ENCODE measurements at regions of chr16 and their contacts with region 1.

Region 1: DNA sequence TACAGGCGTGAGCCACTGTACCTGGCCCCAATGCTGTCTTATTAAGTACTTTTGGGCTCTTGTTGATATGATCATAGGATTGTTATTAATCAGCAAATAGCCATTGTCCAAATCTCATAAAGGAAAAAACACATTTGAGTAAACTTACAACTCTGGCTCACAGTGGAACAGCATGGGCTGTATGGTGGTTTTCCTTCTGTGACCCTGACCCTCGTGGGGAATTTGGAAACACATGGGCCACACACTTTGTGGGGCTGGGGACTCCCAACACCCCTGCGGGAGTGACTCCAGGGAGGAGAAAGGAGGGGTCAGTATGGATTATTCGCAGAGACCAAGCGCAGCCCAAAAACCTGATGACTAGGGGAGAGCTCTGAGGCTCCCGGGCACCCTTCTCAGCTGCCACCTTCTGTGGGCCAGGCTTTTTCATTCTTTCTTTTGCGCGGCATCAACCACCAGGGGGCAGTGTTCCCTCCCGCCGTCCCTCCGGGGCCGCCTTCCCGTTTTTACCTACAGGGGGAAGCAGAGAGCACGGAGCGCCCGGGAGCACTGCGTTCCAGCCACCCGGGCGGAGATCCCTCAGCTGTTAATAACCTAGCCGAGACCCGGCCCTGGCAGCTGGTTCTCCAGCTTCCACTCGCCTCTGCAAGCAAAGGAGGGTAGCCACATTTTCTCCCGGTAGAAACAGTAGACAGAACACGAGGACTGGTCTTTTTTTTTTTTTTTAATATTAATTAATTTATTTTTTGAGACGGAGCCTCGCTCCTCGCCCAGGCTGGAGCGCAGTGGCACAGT is 9.7 kb downstream of the TSNAXIP1 start:
- DNase-seq: peak; percentile 29 to 91
- H3K4me3 ChIP-seq: no peak overlapping the region
- H3K27ac ChIP-seq: no peak overlapping the region
- H3K4me1 ChIP-seq: no peaks in the 10 kb centered on the region
- H3K27me3 ChIP-seq: no peaks in the 10 kb centered on the region
- CTCF ChIP-seq: peak; percentile 99 to 100 (median 99)

Region 2: DNA sequence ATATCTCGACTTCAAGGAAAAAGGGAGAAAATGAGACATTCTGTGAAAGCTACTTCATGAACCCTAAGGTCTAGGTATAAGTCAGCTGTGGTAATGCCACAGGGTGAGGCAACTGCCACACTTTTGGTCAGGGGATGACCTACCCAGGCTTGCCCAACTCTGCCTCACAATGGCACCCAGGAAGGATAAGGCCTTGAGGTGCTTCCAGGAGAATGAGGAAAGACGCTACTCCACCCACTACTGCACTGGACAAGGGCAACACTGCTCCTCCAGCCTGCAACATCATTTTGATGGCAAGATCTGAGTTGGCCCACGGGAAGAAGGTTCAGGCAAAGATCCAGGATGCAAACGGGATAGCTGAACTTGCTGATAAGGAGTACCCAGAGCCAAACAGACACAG is 75.3 kb before region 1 on chr16:
- intact Hi-C with region 1: no loop called
- DNase-seq: no peak
- H3K4me3 ChIP-seq: no peak overlapping the region
- H3K27ac ChIP-seq: no peak overlapping the region
- H3K4me1 ChIP-seq: no peaks in the 10 kb centered on the region
- H3K27me3 ChIP-seq: no peaks in the 10 kb centered on the region
- CTCF ChIP-seq: no peak

Region 3: GRCh38 chr16:67928561-67929364 is 112.3 kb after region 1 on chr16:
- intact Hi-C with region 1: loop called (anchors 1 kb)
- DNase-seq: peak in 1 of 2 donors; percentile 82
- H3K4me3 ChIP-seq: no peak overlapping the region
- H3K27ac ChIP-seq: no peak overlapping the region
- H3K4me1 ChIP-seq: peaks cover 10% of the 10 kb centered on the region in 2 donors
- H3K27me3 ChIP-seq: no peaks in the 10 kb centered on the region
- CTCF ChIP-seq: peak; percentile 68 to 90 (median 88)

Region 4: DNA sequence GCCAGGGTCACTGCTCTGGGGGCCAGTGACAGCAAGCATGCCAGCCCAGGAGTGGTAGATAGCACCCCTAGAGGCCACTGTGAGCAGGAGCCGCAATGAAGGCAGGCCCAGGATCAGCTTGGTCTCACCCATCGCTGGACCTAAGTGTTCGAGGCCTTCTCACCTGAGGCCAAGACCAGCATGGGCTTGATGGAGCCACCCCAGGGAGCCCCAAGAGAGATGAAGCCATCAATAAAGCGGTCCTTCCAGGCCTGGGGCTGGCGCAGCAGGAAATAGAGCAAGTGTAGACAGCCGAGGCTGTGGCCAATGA is 125.7 kb after region 1 on chr16:
- intact Hi-C with region 1: loop called (anchors 5 kb)
- DNase-seq: no peak
- H3K4me3 ChIP-seq: no peak overlapping the region
- H3K27ac ChIP-seq: peak overlapping the region; percentile 81 to 86
- H3K4me1 ChIP-seq: peaks cover 6 to 16% of the 10 kb centered on the region in 2 donors
- H3K27me3 ChIP-seq: no peaks in the 10 kb centered on the region
- CTCF ChIP-seq: peak; percentile 26 to 60 (median 34)

Region 5: GRCh38 chr16:68040507-68041288 is 224.3 kb after region 1 on chr16:
- intact Hi-C with region 1: loop called (anchors 2 kb)
- DNase-seq: peak in 1 of 2 donors; percentile 88
- H3K4me3 ChIP-seq: no peak overlapping the region
- H3K27ac ChIP-seq: no peak overlapping the region
- H3K4me1 ChIP-seq: no peaks in the 10 kb centered on the region
- H3K27me3 ChIP-seq: no peaks in the 10 kb centered on the region
- CTCF ChIP-seq: peak; percentile 76 to 87 (median 87)

Measured in ascending aorta (tissue), 2 donors.